GM12878 (cell line): ENCODE measurements at regions of chr4 and their contacts with region 1.

Region 1: DNA sequence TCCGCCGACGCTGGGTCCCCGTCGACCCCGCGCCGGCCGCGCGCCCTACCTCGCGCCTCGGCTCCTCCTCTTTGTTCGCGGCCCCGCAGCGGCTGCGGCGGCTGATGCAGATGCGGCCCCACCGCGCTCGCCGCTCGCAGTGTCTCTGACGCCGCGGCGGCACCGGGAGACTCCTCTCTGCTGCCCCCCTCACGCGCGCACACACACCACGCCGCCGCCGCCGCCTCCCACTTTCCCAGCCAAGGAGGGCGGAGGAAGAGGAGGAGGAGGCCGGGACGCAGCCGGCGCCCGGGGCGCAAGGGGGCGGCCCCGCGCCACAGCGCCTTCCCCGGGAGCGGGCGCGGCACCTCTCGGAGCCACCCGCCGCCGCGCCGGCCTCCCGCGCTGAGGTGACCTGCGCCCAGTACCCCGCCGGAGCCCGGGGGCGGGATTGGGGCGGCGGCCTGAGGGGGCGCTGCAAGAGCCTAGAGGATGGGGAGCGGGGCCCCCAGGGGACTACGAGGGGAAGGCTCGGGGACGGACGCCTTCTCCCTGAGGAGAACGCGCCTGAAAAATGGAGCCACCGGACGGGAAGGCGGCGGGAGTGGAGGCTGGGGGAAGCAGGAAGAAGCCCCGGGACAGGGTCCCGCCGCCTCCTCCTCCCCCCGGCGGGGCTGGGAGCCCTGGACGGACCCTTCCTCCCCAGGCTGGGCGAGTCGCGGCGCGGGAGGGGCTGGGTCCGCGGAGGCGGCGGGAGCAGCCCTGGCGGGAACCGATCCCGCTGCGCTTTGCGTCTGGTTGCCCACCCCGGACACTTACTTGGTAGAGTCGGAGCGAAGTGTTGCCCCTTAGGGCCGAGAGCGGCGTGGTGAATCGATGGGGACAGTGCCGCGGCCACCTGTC is at the start of gene SH3RF1:
- DNase-seq: no peak
- ATAC-seq: peak; percentile 79
- H3K4me3 ChIP-seq: peak within 1 kb of the TSS; percentile 80
- H3K27ac ChIP-seq: peak within 1 kb of the TSS; percentile 75
- H3K4me1 ChIP-seq: peaks cover 14% of the 10 kb centered on the region
- H3K27me3 ChIP-seq: no peaks in the 10 kb centered on the region
- CTCF ChIP-seq: peak; percentile 24 to 38 (median 25); a peak in 5 of 6 replicates
- EP300 ChIP-seq: no peak; a peak in 1 of 4 replicates
- POLR2A ChIP-seq: peak; percentile 85
- RAD21 ChIP-seq: peak; percentile 44
- polyA plus RNA-seq, gene SH3RF1: 4.5 to 10.7 TPM

Region 2: DNA sequence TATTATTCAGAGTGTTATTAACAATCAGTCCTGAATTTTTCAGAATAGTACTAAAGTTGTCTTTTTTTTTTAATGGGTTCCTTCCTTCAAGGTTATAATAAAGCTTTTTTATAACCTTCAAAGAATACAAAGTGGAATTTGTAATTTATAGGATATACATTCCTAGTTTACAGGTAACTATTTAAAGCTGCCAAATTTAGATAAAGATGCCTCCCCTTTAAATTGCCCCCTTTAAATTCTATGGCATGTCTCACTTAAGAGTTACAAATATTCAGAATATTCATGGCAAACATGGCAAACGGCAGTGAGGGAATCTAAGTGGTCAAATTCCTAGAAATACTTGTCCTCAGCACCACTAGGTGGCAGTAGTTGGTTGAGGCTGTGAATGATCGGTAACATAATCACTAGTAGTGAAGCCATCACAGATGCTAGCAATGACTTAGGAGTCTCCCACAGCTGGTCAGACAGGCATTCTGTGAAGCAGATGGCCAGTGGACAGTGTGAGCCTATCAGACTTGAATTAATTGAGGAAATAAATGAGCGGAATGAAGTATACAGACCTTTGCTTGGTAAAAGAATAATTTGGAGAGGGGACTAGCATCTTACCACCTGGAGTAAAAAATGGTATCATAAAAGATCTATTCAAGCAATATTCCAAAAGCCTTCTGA is 347.4 kb before region 1 on chr4:
- CTCF ChIA-PET with region 1: no interaction called
- POLR2A ChIA-PET with region 1: no interaction called
- RAD21 ChIA-PET with region 1: interaction called, 4 read pairs
- SMC1A ChIA-PET with region 1: interaction called, 5 read pairs
- in situ Hi-C with region 1: no loop called
- intact Hi-C with region 1: loop called (anchors 10 kb)
- DNase-seq: peak; percentile 31
- ATAC-seq: peak; percentile 91
- H3K4me3 ChIP-seq: no peak overlapping the region
- H3K27ac ChIP-seq: no peak overlapping the region
- H3K4me1 ChIP-seq: no peaks in the 10 kb centered on the region
- H3K27me3 ChIP-seq: no peaks in the 10 kb centered on the region
- CTCF ChIP-seq: peak; percentile 68 to 73 (median 69); a peak in 5 of 6 replicates
- EP300 ChIP-seq: no peak
- POLR2A ChIP-seq: no peak
- RAD21 ChIP-seq: peak; percentile 84

Region 3: GRCh38 chr4:169189372-169189771 is 81.7 kb before region 1 on chr4:
- CTCF ChIA-PET with region 1: interaction called, 9 read pairs
- POLR2A ChIA-PET with region 1: interaction called, 4 read pairs
- RAD21 ChIA-PET with region 1: interaction called, 14 read pairs
- SMC1A ChIA-PET with region 1: interaction called, 20 read pairs
- in situ Hi-C with region 1: no loop called
- intact Hi-C with region 1: no loop called
- DNase-seq: no peak
- ATAC-seq: peak; percentile 89
- H3K4me3 ChIP-seq: peak overlapping the region; percentile 37
- H3K27ac ChIP-seq: peak overlapping the region; percentile 52
- H3K4me1 ChIP-seq: peaks cover 17% of the 10 kb centered on the region; the same call in 1 of the 2 replicates
- H3K27me3 ChIP-seq: no peaks in the 10 kb centered on the region
- CTCF ChIP-seq: no peak
- EP300 ChIP-seq: no peak
- POLR2A ChIP-seq: no peak
- RAD21 ChIP-seq: no peak

Region 4: DNA sequence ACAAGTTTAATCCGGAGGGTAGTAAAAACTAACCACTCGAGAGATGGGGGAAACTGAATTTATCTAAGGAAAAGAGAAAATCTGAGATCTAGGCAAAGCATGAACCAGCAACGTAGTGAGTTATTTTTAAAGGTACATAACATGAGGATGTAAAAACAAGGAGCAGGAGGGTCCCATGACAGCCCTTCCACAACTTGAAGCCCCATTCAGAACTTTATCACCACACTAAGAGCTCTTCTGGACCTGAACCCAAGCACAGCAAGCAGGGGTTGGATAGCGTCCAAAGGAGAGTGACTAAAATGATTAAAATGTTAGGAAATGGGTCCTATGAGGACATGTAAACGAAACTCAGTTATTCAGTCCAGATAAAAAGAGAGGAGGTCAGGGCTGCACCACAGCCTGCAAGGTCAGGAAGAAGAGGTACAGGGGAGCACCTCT is 16.5 kb before region 1 on chr4:
- CTCF ChIA-PET with region 1: interaction called, 37 read pairs
- POLR2A ChIA-PET with region 1: interaction called, 17 read pairs
- RAD21 ChIA-PET with region 1: interaction called, 64 read pairs
- SMC1A ChIA-PET with region 1: interaction called, 102 read pairs
- in situ Hi-C with region 1: no loop called
- intact Hi-C with region 1: no loop called
- DNase-seq: no peak
- ATAC-seq: no peak
- H3K4me3 ChIP-seq: no peak overlapping the region
- H3K27ac ChIP-seq: no peak overlapping the region
- H3K4me1 ChIP-seq: no peaks in the 10 kb centered on the region
- H3K27me3 ChIP-seq: no peaks in the 10 kb centered on the region
- CTCF ChIP-seq: no peak
- EP300 ChIP-seq: no peak
- POLR2A ChIP-seq: no peak
- RAD21 ChIP-seq: no peak

Region 5: DNA sequence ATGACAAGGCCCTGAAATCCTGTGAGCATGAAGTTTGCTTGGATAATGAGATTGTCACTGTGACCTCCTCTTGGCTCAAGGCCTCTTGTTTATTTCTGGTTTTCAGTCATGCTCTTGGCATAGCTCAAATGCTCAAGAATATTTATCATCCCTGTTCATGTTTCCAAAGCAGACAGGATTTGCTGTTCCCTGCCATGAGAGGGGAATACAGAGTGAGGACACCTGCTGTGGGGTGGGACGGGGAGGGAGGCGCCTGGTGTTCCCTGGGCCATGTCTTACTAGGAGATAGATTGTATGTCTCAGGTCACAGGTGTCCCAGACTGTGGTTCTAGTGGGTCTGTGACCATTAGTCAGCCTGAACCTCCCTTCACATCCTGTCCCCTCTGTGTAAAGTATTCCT is 34.6 kb after region 1 on chr4:
- CTCF ChIA-PET with region 1: interaction called, 3 read pairs
- POLR2A ChIA-PET with region 1: no interaction called
- RAD21 ChIA-PET with region 1: no interaction called
- SMC1A ChIA-PET with region 1: interaction called, 11 read pairs
- in situ Hi-C with region 1: no loop called
- intact Hi-C with region 1: no loop called
- DNase-seq: no peak
- ATAC-seq: no peak
- H3K4me3 ChIP-seq: no peak overlapping the region
- H3K27ac ChIP-seq: no peak overlapping the region
- H3K4me1 ChIP-seq: peaks cover 3% of the 10 kb centered on the region; the same call in 1 of the 2 replicates
- H3K27me3 ChIP-seq: no peaks in the 10 kb centered on the region
- CTCF ChIP-seq: no peak
- EP300 ChIP-seq: no peak
- POLR2A ChIP-seq: no peak
- RAD21 ChIP-seq: no peak

Region 6: DNA sequence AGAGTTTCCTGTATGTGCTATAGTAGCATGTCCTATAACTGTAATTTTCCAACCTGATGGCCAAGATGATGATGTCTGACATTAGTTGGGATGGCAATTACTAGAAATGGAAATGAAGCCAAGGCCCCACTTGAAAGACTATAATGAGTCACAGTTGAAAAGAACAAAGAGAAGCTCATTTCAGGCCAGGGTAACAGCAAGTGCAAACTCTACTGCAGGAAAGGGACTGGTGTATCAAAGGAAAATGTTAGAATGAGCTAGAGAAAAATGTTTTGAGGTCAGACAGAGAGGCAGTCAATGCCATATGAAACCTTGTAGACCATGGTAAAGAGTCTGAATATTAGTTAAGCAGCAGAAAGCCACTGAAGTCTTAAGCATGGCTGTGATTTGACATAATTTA is 145.9 kb after region 1 on chr4:
- CTCF ChIA-PET with region 1: interaction called, 3 read pairs
- POLR2A ChIA-PET with region 1: no interaction called
- RAD21 ChIA-PET with region 1: interaction called, 8 read pairs
- SMC1A ChIA-PET with region 1: interaction called, 11 read pairs
- in situ Hi-C with region 1: no loop called
- intact Hi-C with region 1: no loop called
- DNase-seq: no peak
- ATAC-seq: peak; percentile 90
- H3K4me3 ChIP-seq: no peak overlapping the region
- H3K27ac ChIP-seq: no peak overlapping the region
- H3K4me1 ChIP-seq: peaks cover 3% of the 10 kb centered on the region
- H3K27me3 ChIP-seq: no peaks in the 10 kb centered on the region
- CTCF ChIP-seq: no peak
- EP300 ChIP-seq: peak in 1 of 2 experiments; percentile 18; a peak in 1 of 4 replicates
- POLR2A ChIP-seq: no peak
- RAD21 ChIP-seq: 0 out of 2 replicates have a peak, but pooled peaks have one; percentile 8